CD8-positive, alpha-beta T cell (primary cell): ENCODE measurements at regions of chr1 and their contacts with region 1.

Region 1: GRCh38 chr1:2953688-2954285 is 67.5 kb upstream of the ACTRT2 start:
- DNase-seq: no peak
- ATAC-seq: no peak
- H3K4me3 ChIP-seq: no peak overlapping the region
- H3K4me3 Mint-ChIP-seq: no peak overlapping the region
- H3K27ac ChIP-seq: no peak overlapping the region
- H3K27ac Mint-ChIP-seq: no peak overlapping the region
- H3K4me1 ChIP-seq: no peaks in the 10 kb centered on the region
- H3K4me1 Mint-ChIP-seq: no peaks in the 10 kb centered on the region
- H3K27me3 ChIP-seq: no peaks in the 10 kb centered on the region
- H3K27me3 Mint-ChIP-seq: peaks cover 4% of the 10 kb centered on the region
- CTCF ChIP-seq: no peak

Region 2: GRCh38 chr1:2930913-2931721 is 22.7 kb before region 1 on chr1:
- CTCF ChIA-PET with region 1: no interaction called
- POLR2A ChIA-PET with region 1: no interaction called
- intact Hi-C with region 1: loop called in 1 of 2 experiments (anchors 1 kb)
- DNase-seq: no peak
- ATAC-seq: no peak
- H3K4me3 ChIP-seq: no peak overlapping the region
- H3K4me3 Mint-ChIP-seq: no peak overlapping the region
- H3K27ac ChIP-seq: no peak overlapping the region
- H3K27ac Mint-ChIP-seq: no peak overlapping the region
- H3K4me1 ChIP-seq: no peaks in the 10 kb centered on the region
- H3K4me1 Mint-ChIP-seq: no peaks in the 10 kb centered on the region
- H3K27me3 ChIP-seq: no peaks in the 10 kb centered on the region
- H3K27me3 Mint-ChIP-seq: no peaks in the 10 kb centered on the region
- CTCF ChIP-seq: no peak